Naive thymus-derived CD4-positive, alpha-beta T cell (primary cell): ENCODE measurements at regions of chr10 and their contacts with region 1.

Region 1: DNA sequence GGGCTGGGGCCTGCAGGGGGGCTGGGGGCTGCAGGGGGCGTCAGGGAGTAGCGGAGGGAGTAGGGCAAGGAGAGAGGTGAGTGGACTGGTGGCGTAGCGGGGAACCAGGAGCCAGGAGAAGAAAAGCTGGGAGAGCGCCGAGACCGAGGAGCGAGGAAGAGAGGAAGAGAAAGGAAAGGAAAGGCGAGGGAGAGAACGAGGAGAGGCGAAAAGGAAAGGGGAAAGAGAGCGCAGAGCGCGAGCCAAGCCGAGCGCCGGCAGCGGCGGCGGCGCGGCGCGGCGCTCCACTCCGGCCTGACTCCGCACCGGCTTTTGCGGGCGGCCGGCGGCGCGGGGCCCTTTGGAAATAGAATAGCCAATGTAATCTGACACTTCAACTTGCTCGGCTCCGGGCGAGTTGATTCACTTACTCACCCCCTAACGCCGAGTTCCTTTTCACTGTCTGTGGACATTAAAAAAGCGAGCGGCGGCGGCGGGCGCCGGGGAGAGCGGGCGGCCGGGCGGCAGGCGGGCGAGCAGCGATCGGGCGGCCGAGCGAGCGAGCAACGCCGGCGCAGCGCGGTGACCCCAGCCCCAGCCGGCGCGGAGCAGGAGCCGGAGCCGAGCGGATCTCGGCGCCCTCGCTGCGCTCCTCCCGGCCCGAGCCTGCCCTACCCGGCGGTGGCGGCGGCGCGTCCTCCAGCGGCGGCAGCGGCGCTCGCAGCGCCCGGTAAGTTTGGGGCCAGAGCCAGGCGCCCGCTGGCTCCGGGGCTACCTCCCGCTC is at the start of gene ZMIZ1:
- DNase-seq: peak; percentile 74 to 86 (median 84)
- ATAC-seq: peak; percentile 78
- H3K4me3 ChIP-seq: peak within 1 kb of the TSS; percentile 83
- H3K4me3 Mint-ChIP-seq: peak within 1 kb of the TSS; percentile 92 to 98 (median 96)
- H3K27ac ChIP-seq: peak within 1 kb of the TSS; percentile 62
- H3K27ac Mint-ChIP-seq: peak within 1 kb of the TSS; percentile 57 to 97 (median 91)
- H3K4me1 ChIP-seq: peaks cover 11 to 24% of the 10 kb centered on the region in 2 donors
- H3K4me1 Mint-ChIP-seq: peaks cover 21 to 65% (median 53%) of the 10 kb centered on the region in 7 donors
- H3K27me3 ChIP-seq: no peaks in the 10 kb centered on the region
- H3K27me3 Mint-ChIP-seq: peaks cover 0 to 25% (median 0%) of the 10 kb centered on the region in 5 donors
- total RNA-seq, gene ZMIZ1: 13.5 to 57.2 (median 24.5) TPM

Region 2: GRCh38 chr10:78302989-78303854 is 765.5 kb before region 1 on chr10:
- CTCF ChIA-PET with region 1: no interaction called
- POLR2A ChIA-PET with region 1: no interaction called
- intact Hi-C with region 1: loop called (anchors 1 kb)
- DNase-seq: peak; percentile 89 to 98 (median 94)
- ATAC-seq: peak; percentile 92
- H3K4me3 ChIP-seq: peak overlapping the region; percentile 92
- H3K4me3 Mint-ChIP-seq: peak overlapping the region; percentile 90 to 99 (median 96)
- H3K27ac ChIP-seq: peak overlapping the region; percentile 87
- H3K27ac Mint-ChIP-seq: peak overlapping the region; percentile 94 to 99 (median 97)
- H3K4me1 ChIP-seq: peaks cover 10 to 11% of the 10 kb centered on the region in 2 donors
- H3K4me1 Mint-ChIP-seq: peaks cover 6 to 34% (median 19%) of the 10 kb centered on the region in 7 donors
- H3K27me3 ChIP-seq: no peaks in the 10 kb centered on the region
- H3K27me3 Mint-ChIP-seq: peaks cover 0 to 23% (median 0%) of the 10 kb centered on the region in 5 donors

Region 3: DNA sequence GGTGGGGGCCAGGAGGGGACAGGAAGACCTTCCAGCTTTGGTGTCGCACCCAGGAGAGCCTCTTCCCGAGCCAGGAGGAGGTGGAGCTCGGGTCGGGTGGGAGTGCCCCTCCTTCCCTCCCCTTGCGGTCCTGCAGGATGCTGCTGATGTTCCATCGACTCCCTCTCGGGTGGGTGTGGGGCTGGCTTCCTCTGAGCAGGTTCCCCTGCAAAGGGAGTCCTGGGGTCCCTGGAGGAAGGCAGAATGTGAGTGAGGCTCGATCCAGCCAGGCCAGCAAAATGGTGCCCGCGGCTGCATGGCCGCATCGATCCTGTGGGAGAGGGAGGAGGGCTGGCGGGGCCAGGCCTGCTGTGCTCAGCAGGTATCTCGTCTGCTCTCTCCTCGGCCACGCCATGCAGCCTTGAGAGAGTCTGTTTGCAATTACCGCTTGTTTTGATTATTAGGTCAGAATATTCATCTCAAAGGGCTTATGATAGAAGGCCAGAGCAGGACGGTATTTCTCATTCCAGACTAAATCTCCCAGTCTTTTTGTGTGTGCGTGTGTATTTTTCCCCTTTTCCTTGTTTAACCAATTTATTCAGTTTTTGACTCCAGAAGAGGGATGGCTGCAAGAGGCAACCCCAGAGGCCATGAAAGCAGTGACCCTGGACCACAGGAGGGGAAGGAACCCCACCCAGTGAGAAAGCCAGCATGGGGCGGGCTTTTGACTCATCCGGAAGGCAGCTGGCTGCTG is 137.3 kb before region 1 on chr10:
- CTCF ChIA-PET with region 1: no interaction called
- POLR2A ChIA-PET with region 1: no interaction called
- intact Hi-C with region 1: no loop called
- DNase-seq: no peak
- ATAC-seq: no peak
- H3K4me3 ChIP-seq: no peak overlapping the region
- H3K4me3 Mint-ChIP-seq: no peak overlapping the region
- H3K27ac ChIP-seq: no peak overlapping the region
- H3K27ac Mint-ChIP-seq: no peak overlapping the region
- H3K4me1 ChIP-seq: no peaks in the 10 kb centered on the region
- H3K4me1 Mint-ChIP-seq: no peaks in the 10 kb centered on the region
- H3K27me3 ChIP-seq: no peaks in the 10 kb centered on the region
- H3K27me3 Mint-ChIP-seq: no peaks in the 10 kb centered on the region

Region 4: GRCh38 chr10:78972947-78973900 is 95.5 kb before region 1 on chr10:
- CTCF ChIA-PET with region 1: no interaction called
- POLR2A ChIA-PET with region 1: interaction called, 4 read pairs
- intact Hi-C with region 1: loop called (anchors 1 kb)
- DNase-seq: peak; percentile 24 to 83 (median 43)
- ATAC-seq: peak; percentile 72
- H3K4me3 ChIP-seq: peak overlapping the region; percentile 13
- H3K4me3 Mint-ChIP-seq: peak overlapping the region; percentile 72 to 89 (median 84)
- H3K27ac ChIP-seq: no peak overlapping the region
- H3K27ac Mint-ChIP-seq: peak overlapping the region in 7 of 9 donors; percentile 2 to 85 (median 66)
- H3K4me1 ChIP-seq: peaks cover 8 to 11% of the 10 kb centered on the region in 2 donors
- H3K4me1 Mint-ChIP-seq: peaks cover 15 to 28% (median 17%) of the 10 kb centered on the region in 7 donors
- H3K27me3 ChIP-seq: no peaks in the 10 kb centered on the region
- H3K27me3 Mint-ChIP-seq: peaks cover 0 to 8% (median 0%) of the 10 kb centered on the region in 5 donors

Region 5: GRCh38 chr10:79149662-79150443 is 81.1 kb after region 1 on chr10:
- CTCF ChIA-PET with region 1: no interaction called
- POLR2A ChIA-PET with region 1: no interaction called
- intact Hi-C with region 1: loop called in 1 of 2 experiments (anchors 5 kb)
- DNase-seq: peak in 6 of 9 donors; percentile 12 to 40 (median 26)
- ATAC-seq: peak; percentile 78
- H3K4me3 ChIP-seq: no peak overlapping the region
- H3K4me3 Mint-ChIP-seq: peak overlapping the region in 8 of 10 donors; percentile 27 to 63 (median 37)
- H3K27ac ChIP-seq: peak overlapping the region; percentile 27
- H3K27ac Mint-ChIP-seq: peak overlapping the region in 8 of 9 donors; percentile 66 to 93 (median 82)
- H3K4me1 ChIP-seq: peaks cover 18 to 58% of the 10 kb centered on the region in 2 donors
- H3K4me1 Mint-ChIP-seq: peaks cover 26 to 61% (median 47%) of the 10 kb centered on the region in 7 donors
- H3K27me3 ChIP-seq: no peaks in the 10 kb centered on the region
- H3K27me3 Mint-ChIP-seq: no peaks in the 10 kb centered on the region

Region 6: GRCh38 chr10:79322616-79323543 is 254.1 kb after region 1 on chr10:
- CTCF ChIA-PET with region 1: no interaction called
- POLR2A ChIA-PET with region 1: no interaction called
- intact Hi-C with region 1: loop called in 1 of 2 experiments (anchors 10 kb)
- DNase-seq: peak; percentile 53 to 92 (median 90)
- ATAC-seq: peak; percentile 90
- H3K4me3 ChIP-seq: peak overlapping the region; percentile 20
- H3K4me3 Mint-ChIP-seq: peak overlapping the region; percentile 70 to 88 (median 80)
- H3K27ac ChIP-seq: peak overlapping the region; percentile 65
- H3K27ac Mint-ChIP-seq: peak overlapping the region; percentile 77 to 99 (median 94)
- H3K4me1 ChIP-seq: peaks cover 58 to 63% of the 10 kb centered on the region in 2 donors
- H3K4me1 Mint-ChIP-seq: peaks cover 50 to 74% (median 68%) of the 10 kb centered on the region in 7 donors
- H3K27me3 ChIP-seq: no peaks in the 10 kb centered on the region
- H3K27me3 Mint-ChIP-seq: no peaks in the 10 kb centered on the region

Region 7: DNA sequence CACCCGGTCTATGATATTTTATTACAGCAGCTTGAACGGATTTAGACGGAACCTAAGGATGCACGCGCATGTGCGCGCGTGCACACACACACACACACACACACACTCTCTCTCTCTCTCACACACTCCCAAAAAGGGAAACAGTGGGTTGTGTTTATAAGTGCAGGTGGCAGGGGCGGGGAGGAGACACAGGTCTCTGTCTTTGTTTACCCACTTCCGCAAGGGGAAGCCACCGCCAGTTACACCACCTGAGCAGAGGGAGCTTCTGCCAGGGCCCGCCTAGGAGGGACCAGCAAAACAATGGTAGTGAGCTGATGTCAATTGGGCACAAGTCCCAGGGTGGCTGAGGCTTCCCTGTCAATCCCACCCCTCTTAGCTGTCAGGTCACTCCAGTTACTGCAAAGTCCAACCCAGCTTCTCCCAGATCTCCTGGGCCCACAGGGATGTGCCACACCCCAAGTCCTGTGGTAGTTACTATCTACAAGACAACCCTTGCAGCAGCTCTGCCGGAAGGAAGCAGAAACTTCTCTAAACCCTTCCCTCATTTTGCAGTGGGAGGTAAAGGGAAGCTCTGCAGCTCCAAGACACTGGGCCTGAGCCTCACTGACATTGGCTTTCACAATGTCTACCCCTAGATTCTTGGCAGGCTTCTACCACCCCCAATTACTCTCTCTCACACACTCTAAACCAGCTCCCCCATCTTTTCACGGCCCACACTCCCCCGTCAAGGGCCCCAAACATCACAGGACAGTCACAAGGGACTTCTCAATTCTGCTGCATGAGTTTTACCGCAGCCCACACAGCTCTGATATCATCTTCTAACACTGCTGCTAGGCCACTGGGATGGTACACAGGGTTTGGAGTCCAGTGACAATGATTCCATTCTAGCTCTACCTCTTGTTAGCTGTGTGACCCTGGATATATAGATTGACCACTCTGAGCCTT is 1119.0 kb after region 1 on chr10:
- CTCF ChIA-PET with region 1: interaction called, 4 read pairs
- POLR2A ChIA-PET with region 1: interaction called, 3 read pairs
- intact Hi-C with region 1: loop called in 1 of 2 experiments (anchors 10 kb)
- DNase-seq: peak; percentile 58 to 96 (median 93)
- ATAC-seq: peak; percentile 94
- H3K4me3 ChIP-seq: peak overlapping the region; percentile 37
- H3K4me3 Mint-ChIP-seq: peak overlapping the region; percentile 77 to 95 (median 85)
- H3K27ac ChIP-seq: peak overlapping the region; percentile 84
- H3K27ac Mint-ChIP-seq: peak overlapping the region; percentile 90 to 98 (median 93)
- H3K4me1 ChIP-seq: peaks cover 48 to 81% of the 10 kb centered on the region in 2 donors
- H3K4me1 Mint-ChIP-seq: peaks cover 74 to 91% (median 90%) of the 10 kb centered on the region in 7 donors
- H3K27me3 ChIP-seq: no peaks in the 10 kb centered on the region
- H3K27me3 Mint-ChIP-seq: no peaks in the 10 kb centered on the region